Esophagus muscularis mucosa (tissue), 4 donors: ENCODE measurements at regions of chr4 and their contacts with region 1.

Region 1: GRCh38 chr4:112099701-112100297 is 45.5 kb upstream of the FAM241A start:
- DNase-seq: no peak
- H3K4me3 ChIP-seq: no peak overlapping the region
- H3K27ac ChIP-seq: no peak overlapping the region
- H3K4me1 ChIP-seq: peaks cover 0 to 8% (median 6%) of the 10 kb centered on the region in 4 donors
- H3K27me3 ChIP-seq: no peaks in the 10 kb centered on the region
- CTCF ChIP-seq: peak; percentile 60 to 70 (median 69)
- EP300 ChIP-seq: no peak
- POLR2A ChIP-seq: no peak

Region 2: DNA sequence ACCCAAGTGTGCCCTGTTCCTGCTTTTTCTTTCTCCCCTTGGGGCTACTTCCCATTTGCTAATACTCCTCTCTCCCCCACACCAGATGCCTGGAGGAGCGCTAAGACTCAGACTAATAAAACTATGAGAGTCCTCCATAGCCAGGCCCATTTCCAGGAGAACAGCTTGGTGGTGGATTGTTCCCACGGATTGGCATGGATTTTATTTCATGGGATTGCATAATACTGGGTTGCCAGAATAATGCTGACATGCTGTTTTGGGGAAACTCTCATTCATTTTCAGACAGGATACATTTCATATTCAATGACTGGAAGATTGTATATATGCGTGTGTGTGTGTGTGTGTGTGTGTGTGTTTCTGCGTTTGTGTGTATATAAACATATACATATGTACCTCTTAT is 1029.4 kb before region 1 on chr4:
- intact Hi-C with region 1: no loop called
- DNase-seq: no peak
- H3K4me3 ChIP-seq: no peak overlapping the region
- H3K27ac ChIP-seq: no peak overlapping the region
- H3K4me1 ChIP-seq: no peaks in the 10 kb centered on the region
- H3K27me3 ChIP-seq: no peaks in the 10 kb centered on the region
- CTCF ChIP-seq: no peak
- EP300 ChIP-seq: no peak
- POLR2A ChIP-seq: no peak

Region 3: GRCh38 chr4:112145326-112145819 is 45.6 kb after region 1 on chr4 and contains the start of gene FAM241A:
- intact Hi-C with region 1: loop called (anchors 5 kb)
- DNase-seq: peak; percentile 97
- H3K4me3 ChIP-seq: peak within 1 kb of the TSS; percentile 72 to 92 (median 89)
- H3K27ac ChIP-seq: peak within 1 kb of the TSS; percentile 92 to 97 (median 94)
- H3K4me1 ChIP-seq: peaks cover 17 to 28% (median 19%) of the 10 kb centered on the region in 4 donors
- H3K27me3 ChIP-seq: no peaks in the 10 kb centered on the region
- CTCF ChIP-seq: no peak
- EP300 ChIP-seq: no peak
- POLR2A ChIP-seq: peak; percentile 46
- total RNA-seq, gene FAM241A: 5.0 to 7.5 (median 5.2) TPM

Region 4: DNA sequence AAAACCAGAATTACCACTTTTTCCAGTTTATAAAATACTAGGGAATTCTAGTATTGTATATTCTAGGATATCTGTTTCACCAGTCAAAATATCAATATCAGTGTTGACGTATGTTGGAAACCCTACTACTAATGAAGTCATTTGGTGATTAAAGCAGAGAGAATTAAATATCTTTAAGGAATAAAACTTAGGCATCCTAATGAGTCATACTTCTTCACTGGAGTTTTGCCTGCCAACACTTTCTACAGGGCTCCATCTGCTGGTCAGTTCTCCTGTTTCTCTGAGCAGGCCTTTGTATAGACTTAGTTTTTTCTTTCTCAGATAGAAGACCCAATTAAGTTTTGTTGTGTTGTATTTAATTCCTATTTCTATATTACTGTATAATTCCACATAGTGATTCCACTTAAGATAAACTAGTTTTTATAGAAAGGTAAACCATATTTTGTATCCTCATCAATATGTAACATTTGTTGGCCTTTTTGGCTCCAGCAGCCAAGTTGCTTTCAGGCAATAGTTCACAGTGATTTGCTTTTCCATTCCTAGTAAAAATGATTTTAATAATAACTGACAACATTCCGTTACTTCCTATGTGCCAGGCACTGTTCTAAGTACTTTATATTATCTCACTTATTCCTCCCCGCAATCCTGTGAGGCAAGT is 135.3 kb after region 1 on chr4:
- intact Hi-C with region 1: loop called (anchors 1 kb)
- DNase-seq: no peak
- H3K4me3 ChIP-seq: no peak overlapping the region
- H3K27ac ChIP-seq: no peak overlapping the region
- H3K4me1 ChIP-seq: peaks cover 6 to 30% (median 23%) of the 10 kb centered on the region in 4 donors
- H3K27me3 ChIP-seq: no peaks in the 10 kb centered on the region
- CTCF ChIP-seq: peak; percentile 74 to 80 (median 75)
- EP300 ChIP-seq: no peak
- POLR2A ChIP-seq: no peak